ENCODE measurements at regions of chr7 and their contacts with region 1.

Region 1: GRCh38 chr7:8442814-8443313 is 9.5 kb downstream of the NXPH1 start:
- DNase-seq: no peak
- ATAC-seq: no peak
- H3K4me3 ChIP-seq: no peak overlapping the region
- H3K27ac ChIP-seq: no peak overlapping the region
- H3K4me1 ChIP-seq: no peaks in the 10 kb centered on the region
- H3K27me3 ChIP-seq: no peaks in the 10 kb centered on the region
- CTCF ChIP-seq: no peak
- EP300 ChIP-seq: no peak
- POLR2A ChIP-seq: no peak
- RAD21 ChIP-seq: no peak

Region 2: GRCh38 chr7:8714791-8715190 is 271.9 kb after region 1 on chr7:
- CTCF ChIA-PET with region 1: no interaction called
- POLR2A ChIA-PET with region 1: no interaction called
- in situ Hi-C with region 1: loop called (anchors 10 kb)
- intact Hi-C with region 1: no loop called
- DNase-seq: no peak
- ATAC-seq: no peak
- H3K4me3 ChIP-seq: no peak overlapping the region
- H3K27ac ChIP-seq: no peak overlapping the region
- H3K4me1 ChIP-seq: no peaks in the 10 kb centered on the region
- H3K27me3 ChIP-seq: no peaks in the 10 kb centered on the region
- CTCF ChIP-seq: no peak
- EP300 ChIP-seq: no peak
- POLR2A ChIP-seq: no peak
- RAD21 ChIP-seq: no peak

Region 3: DNA sequence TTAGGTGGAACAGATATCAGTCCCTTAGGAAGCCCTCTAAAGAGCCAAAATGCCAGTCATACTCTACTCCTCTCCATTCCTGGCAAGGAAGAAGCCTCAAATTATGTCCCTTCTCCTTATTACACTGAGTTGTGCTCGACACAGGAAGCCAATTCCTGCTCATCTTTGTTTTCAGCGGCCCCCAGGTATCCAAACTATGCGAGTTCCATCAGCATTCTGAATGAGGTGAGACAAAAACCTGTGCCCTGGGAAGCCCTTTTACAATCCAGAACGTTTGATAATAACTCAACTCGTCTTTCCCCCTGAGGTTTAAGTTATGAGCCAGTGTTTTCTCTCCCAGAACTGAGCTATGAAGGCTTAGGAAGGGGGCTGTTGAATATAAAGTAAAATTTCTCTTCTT is 571.1 kb after region 1 on chr7:
- CTCF ChIA-PET with region 1: no interaction called
- POLR2A ChIA-PET with region 1: no interaction called
- in situ Hi-C with region 1: no loop called
- intact Hi-C with region 1: no loop called
- DNase-seq: no peak
- ATAC-seq: no peak
- H3K4me3 ChIP-seq: no peak overlapping the region
- H3K27ac ChIP-seq: no peak overlapping the region
- H3K4me1 ChIP-seq: no peaks in the 10 kb centered on the region
- H3K27me3 ChIP-seq: no peaks in the 10 kb centered on the region
- CTCF ChIP-seq: no peak
- EP300 ChIP-seq: no peak
- POLR2A ChIP-seq: no peak
- RAD21 ChIP-seq: no peak